A549 (cell line): ENCODE measurements at regions of chr19 and their contacts with region 1.

Region 1: DNA sequence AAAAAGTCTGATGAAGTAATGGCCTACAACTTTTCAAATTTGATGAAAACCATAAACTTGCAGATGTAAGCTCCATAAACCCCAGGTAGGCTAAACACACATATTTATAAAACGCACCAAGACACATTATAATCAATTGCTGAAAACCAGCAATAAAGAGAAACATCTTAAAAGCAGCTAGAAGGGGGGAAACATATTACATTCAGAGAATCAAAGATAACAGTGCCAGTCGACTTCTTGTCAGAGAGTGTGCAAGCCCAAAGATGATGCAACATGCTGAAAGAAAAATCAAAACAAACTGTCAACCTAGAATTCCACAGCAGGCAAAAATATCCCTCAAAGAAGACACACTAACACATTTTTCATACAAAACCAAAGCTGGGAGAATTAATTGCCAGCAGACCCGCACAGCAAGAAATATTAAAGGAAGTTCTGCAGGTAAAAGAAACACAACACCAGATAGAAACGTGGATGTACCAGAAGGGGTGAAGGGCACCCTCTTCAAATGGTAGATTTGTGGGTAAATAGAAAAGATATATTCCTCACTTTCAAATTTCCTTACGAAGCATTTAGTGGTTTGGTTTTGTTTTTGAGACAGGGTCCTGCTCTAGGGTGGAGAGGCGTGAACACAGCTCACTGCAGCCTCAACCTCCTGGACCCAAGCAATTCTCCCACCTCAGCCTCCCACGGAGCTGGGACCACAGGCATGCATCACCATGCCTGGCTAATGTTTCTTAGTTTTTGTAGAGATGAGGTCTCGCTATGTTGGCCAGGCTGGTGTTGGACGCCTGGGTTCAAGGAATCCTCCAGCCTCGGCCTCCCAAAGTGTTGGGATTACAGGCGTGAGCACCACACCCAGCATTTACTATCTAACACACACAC is 16.5 kb upstream of the ATP1A3 start:
- DNase-seq: no peak
- ATAC-seq: no peak
- H3K4me3 ChIP-seq: no peak overlapping the region
- H3K27ac ChIP-seq: peak overlapping the region; percentile 66 to 77
- H3K4me1 ChIP-seq: peaks cover 12% of the 10 kb centered on the region
- CTCF ChIP-seq: no peak
- EP300 ChIP-seq: no peak
- POLR2A ChIP-seq: no peak
- RAD21 ChIP-seq: no peak

Region 2: GRCh38 chr19:41912899-41913537 is 97.5 kb before region 1 on chr19:
- CTCF ChIA-PET with region 1: no interaction called
- POLR2A ChIA-PET with region 1: no interaction called
- DNase-seq: no peak
- ATAC-seq: peak; percentile 17 to 61; a peak in 5 of 6 replicates
- H3K4me3 ChIP-seq: no peak overlapping the region
- H3K27ac ChIP-seq: peak overlapping the region in 1 of 2 experiments; percentile 1; a peak in 1 of 6 replicates
- H3K4me1 ChIP-seq: peaks cover 17% of the 10 kb centered on the region
- CTCF ChIP-seq: no peak
- EP300 ChIP-seq: no peak
- POLR2A ChIP-seq: no peak
- RAD21 ChIP-seq: no peak

Region 3: GRCh38 chr19:41993612-41994483 is 16.6 kb before region 1 on chr19 and contains the start of gene ATP1A3:
- CTCF ChIA-PET with region 1: interaction called, 344 read pairs
- POLR2A ChIA-PET with region 1: interaction called, 3 read pairs
- DNase-seq: peak; percentile 68 to 99
- ATAC-seq: peak; percentile 43 to 86
- H3K4me3 ChIP-seq: peak within 1 kb of the TSS; percentile 51
- H3K27ac ChIP-seq: peak within 1 kb of the TSS in 1 of 2 experiments; percentile 69; a peak in 3 of 6 replicates
- H3K4me1 ChIP-seq: peaks cover 27% of the 10 kb centered on the region
- CTCF ChIP-seq: no peak
- EP300 ChIP-seq: no peak
- POLR2A ChIP-seq: no peak
- RAD21 ChIP-seq: no peak
- polyA plus RNA-seq, gene ATP1A3: 0.67 and 0.69 TPM in 2 replicates